Activated naive CD4-positive, alpha-beta T cell treated with anti-CD3 and anti-CD28 coated beads, Interleukin-2, amount 10 ng/mL, durations not matched to agents 7 days and 5 days (primary cell): ENCODE measurements at regions of chr5 and their contacts with region 1.

Region 1: GRCh38 chr5:55691265-55692105 is 20.6 kb downstream of the SLC38A9 start:
- DNase-seq: no peak
- H3K4me3 Mint-ChIP-seq: no peak overlapping the region
- H3K27ac Mint-ChIP-seq: no peak overlapping the region
- H3K4me1 Mint-ChIP-seq: peaks cover 10% of the 10 kb centered on the region
- H3K27me3 Mint-ChIP-seq: no peaks in the 10 kb centered on the region

Region 2: DNA sequence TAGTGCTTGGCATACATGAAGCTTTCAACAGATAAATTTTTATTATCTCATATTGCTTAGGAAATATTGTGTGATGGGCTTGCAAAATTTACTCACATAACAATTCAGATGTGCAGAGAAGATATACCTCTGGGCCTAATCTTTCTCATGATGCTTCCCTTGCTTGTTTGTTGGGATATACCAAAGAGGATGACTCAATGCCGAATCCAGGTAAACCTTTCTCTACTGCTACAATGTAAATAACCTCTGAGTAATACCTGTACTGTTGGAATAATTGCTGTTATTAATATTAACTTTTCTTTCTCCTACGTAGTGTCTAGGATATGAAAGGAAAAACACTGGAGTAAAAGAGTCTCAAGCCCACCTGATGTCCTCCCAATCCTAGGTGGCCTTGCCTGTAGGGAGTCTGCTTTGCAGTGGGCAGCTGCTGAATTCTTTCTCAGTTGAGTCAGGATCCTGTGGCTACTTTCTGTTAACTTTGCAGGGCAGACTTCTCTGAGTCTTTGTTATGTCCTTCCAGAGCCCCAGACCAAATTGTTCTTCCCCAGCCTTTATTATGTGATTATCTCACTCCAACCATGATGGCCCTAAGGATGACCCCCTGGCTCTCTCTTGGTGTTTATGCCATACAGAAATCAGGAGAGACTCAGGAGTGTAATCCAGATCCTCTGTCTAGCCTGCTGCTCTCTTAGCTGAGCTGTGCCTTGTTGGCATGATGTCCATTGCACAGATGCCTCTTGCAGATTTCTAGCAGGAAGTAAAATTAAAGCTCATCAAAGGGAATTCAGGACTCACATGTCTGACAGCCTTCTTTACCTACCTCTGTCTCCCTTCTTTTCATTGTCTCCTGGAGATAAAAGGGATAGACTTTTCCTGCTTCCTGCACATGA is 965.8 kb before region 1 on chr5:
- CTCF ChIA-PET with region 1: no interaction called
- DNase-seq: no peak
- H3K4me3 Mint-ChIP-seq: no peak overlapping the region
- H3K27ac Mint-ChIP-seq: no peak overlapping the region
- H3K4me1 Mint-ChIP-seq: peaks cover 2% of the 10 kb centered on the region
- H3K27me3 Mint-ChIP-seq: peaks cover 18% of the 10 kb centered on the region

Region 3: DNA sequence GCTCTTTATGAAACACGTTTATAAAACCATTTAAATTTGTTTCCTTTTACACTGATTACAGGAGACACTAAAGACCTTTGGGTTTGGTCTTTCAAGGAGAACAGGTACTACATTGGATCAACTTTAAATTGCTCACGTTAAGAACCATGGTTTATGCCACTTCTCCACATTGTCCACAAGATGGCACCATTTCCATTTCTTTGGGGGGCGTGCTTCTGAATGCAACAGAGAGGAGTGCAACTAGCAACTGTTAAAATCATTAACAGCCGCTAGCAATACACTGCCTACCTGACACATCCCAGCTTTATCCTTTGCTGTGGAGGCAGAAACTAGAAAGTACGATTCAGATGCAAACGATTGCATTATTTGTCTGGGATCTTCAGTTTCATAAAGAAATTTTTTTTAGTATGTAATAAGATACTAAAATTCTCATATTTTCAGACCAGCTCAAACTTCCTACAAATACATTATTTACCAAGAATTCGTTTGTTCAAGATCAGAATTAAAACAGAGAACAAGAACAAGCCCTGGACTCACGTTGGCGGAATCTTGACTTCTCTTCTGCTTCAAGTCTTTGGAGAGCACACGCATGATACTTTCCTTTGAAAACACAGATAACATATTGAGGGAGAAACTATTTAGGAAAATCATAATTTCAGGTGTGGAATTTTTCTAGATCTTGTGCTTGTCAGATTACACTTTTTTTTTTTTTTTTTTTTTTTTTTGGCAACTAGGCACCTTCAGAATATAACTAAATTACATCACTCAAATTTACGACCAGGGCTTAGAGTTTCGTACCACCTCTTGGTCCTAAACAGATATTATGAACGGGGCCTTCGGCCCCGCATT is 519.2 kb before region 1 on chr5:
- CTCF ChIA-PET with region 1: interaction called, 10 read pairs
- DNase-seq: peak; percentile 74
- H3K4me3 Mint-ChIP-seq: peak overlapping the region; percentile 77
- H3K27ac Mint-ChIP-seq: no peak overlapping the region
- H3K4me1 Mint-ChIP-seq: peaks cover 43% of the 10 kb centered on the region
- H3K27me3 Mint-ChIP-seq: peaks cover 78% of the 10 kb centered on the region

Region 4: DNA sequence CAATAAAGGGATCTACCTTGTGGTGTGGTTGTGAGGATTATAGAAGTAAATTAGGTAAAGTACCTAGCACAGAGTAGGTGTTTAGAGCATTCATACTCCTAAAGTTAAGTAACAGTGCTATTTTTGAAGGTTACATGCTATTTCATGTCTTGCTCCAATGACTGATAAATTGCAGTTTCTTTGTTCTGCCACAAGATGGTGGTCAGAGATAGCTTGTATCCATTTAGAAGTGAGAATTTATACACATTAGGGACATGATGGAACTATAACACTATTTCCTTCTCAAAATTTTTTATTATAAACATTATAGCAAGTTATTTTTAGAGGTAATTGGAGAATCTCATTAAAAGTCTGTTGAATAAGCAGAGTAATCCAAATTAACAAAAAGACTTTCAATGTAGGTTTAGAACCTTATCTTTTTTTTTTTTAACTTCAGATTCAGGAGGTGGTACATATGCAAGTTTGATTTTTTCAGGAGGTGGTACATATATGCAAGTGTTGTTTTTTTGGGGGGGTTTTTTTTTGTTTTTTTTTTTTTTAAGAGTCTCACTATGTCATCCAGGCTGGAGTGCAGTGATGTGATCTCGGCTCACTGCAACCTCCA is 366.6 kb before region 1 on chr5:
- CTCF ChIA-PET with region 1: interaction called, 11 read pairs
- DNase-seq: no peak
- H3K4me3 Mint-ChIP-seq: no peak overlapping the region
- H3K27ac Mint-ChIP-seq: no peak overlapping the region
- H3K4me1 Mint-ChIP-seq: peaks cover 18% of the 10 kb centered on the region
- H3K27me3 Mint-ChIP-seq: no peaks in the 10 kb centered on the region

Region 5: GRCh38 chr5:55344392-55344992 is 347.0 kb before region 1 on chr5:
- CTCF ChIA-PET with region 1: interaction called, 14 read pairs
- DNase-seq: peak; percentile 77
- H3K4me3 Mint-ChIP-seq: no peak overlapping the region
- H3K27ac Mint-ChIP-seq: no peak overlapping the region
- H3K4me1 Mint-ChIP-seq: peaks cover 6% of the 10 kb centered on the region
- H3K27me3 Mint-ChIP-seq: no peaks in the 10 kb centered on the region

Region 6: GRCh38 chr5:55407059-55407684 is 284.3 kb before region 1 on chr5:
- CTCF ChIA-PET with region 1: interaction called, 12 read pairs
- DNase-seq: peak; percentile 36
- H3K4me3 Mint-ChIP-seq: no peak overlapping the region
- H3K27ac Mint-ChIP-seq: no peak overlapping the region
- H3K4me1 Mint-ChIP-seq: peaks cover 5% of the 10 kb centered on the region
- H3K27me3 Mint-ChIP-seq: no peaks in the 10 kb centered on the region

Region 7: GRCh38 chr5:56290378-56291078 is 599.0 kb after region 1 on chr5:
- CTCF ChIA-PET with region 1: no interaction called
- DNase-seq: no peak
- H3K4me3 Mint-ChIP-seq: no peak overlapping the region
- H3K27ac Mint-ChIP-seq: no peak overlapping the region
- H3K4me1 Mint-ChIP-seq: peaks cover 2% of the 10 kb centered on the region
- H3K27me3 Mint-ChIP-seq: peaks cover 4% of the 10 kb centered on the region